Activated B cell treated with CpG ODN at 0.5 μM for 24 hours (primary cell): ENCODE measurements at regions of chr19 and their contacts with region 1.

Region 1: GRCh38 chr19:54364775-54365257 is at the start of gene LAIR1:
- DNase-seq: no peak
- ATAC-seq: peak; percentile 61
- H3K4me3 Mint-ChIP-seq: peak within 1 kb of the TSS; percentile 88
- H3K27ac Mint-ChIP-seq: peak within 1 kb of the TSS; percentile 90
- H3K4me1 Mint-ChIP-seq: peaks cover 88% of the 10 kb centered on the region
- H3K27me3 Mint-ChIP-seq: no peaks in the 10 kb centered on the region
- CTCF ChIP-seq: no peak
- total RNA-seq, gene LAIR1: 30.5 and 31.0 TPM in 2 replicates

Region 2: GRCh38 chr19:54062643-54063042 is 302.2 kb before region 1 on chr19:
- CTCF ChIA-PET with region 1: no interaction called
- POLR2A ChIA-PET with region 1: no interaction called
- intact Hi-C with region 1: no loop called
- DNase-seq: no peak
- ATAC-seq: no peak
- H3K4me3 Mint-ChIP-seq: no peak overlapping the region
- H3K27ac Mint-ChIP-seq: no peak overlapping the region
- H3K4me1 Mint-ChIP-seq: no peaks in the 10 kb centered on the region
- H3K27me3 Mint-ChIP-seq: peaks cover 10% of the 10 kb centered on the region
- CTCF ChIP-seq: no peak

Region 3: DNA sequence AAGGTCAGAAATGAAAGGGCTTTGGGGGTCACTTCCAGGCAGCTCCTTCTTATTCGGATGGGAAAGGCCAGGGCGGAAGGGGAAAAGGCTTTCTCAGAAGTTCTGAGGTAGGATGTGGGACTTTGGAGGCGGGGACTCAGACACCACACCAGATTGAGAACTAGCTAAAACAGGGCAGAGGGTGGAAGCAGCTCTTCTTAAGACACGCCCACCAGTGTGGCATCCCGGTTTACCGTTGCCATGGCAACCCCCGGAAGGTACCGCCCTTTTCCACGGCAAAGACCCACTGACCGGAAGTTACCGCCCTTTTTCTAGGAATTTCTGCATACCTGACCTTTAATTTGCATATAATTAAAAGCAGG is 48.1 kb before region 1 on chr19:
- CTCF ChIA-PET with region 1: no interaction called
- POLR2A ChIA-PET with region 1: no interaction called
- intact Hi-C with region 1: no loop called
- DNase-seq: no peak
- ATAC-seq: no peak
- H3K4me3 Mint-ChIP-seq: no peak overlapping the region
- H3K27ac Mint-ChIP-seq: no peak overlapping the region
- H3K4me1 Mint-ChIP-seq: peaks cover 52% of the 10 kb centered on the region
- H3K27me3 Mint-ChIP-seq: peaks cover 13% of the 10 kb centered on the region
- CTCF ChIP-seq: no peak

Region 4: DNA sequence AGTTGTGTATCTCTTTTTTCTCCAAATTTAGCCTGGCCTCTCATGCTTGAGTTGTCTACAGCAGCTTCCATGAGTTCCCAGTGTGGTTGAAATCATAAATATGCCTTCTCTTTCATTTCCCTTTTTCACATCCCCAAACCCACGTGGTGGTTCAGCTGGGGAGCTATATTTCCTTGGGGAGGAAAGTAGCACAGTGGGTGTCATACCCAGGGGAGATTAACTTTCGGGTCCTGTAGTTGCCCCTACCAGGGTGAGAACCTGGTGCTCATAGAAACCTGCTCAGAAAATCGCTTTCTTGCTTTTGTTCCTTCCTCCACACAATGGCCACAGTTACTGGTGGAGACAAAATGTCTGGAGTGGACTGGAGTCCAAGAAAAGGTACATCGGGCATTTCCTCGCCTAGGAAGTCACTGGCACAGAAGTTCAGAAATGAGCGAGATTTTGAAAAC is 18.9 kb before region 1 on chr19:
- CTCF ChIA-PET with region 1: no interaction called
- POLR2A ChIA-PET with region 1: interaction called, 14 read pairs
- intact Hi-C with region 1: no loop called
- DNase-seq: peak; percentile 42
- ATAC-seq: peak; percentile 94
- H3K4me3 Mint-ChIP-seq: peak overlapping the region; percentile 81
- H3K27ac Mint-ChIP-seq: peak overlapping the region; percentile 91
- H3K4me1 Mint-ChIP-seq: peaks cover 89% of the 10 kb centered on the region
- H3K27me3 Mint-ChIP-seq: peaks cover 4% of the 10 kb centered on the region
- CTCF ChIP-seq: no peak

Region 5: DNA sequence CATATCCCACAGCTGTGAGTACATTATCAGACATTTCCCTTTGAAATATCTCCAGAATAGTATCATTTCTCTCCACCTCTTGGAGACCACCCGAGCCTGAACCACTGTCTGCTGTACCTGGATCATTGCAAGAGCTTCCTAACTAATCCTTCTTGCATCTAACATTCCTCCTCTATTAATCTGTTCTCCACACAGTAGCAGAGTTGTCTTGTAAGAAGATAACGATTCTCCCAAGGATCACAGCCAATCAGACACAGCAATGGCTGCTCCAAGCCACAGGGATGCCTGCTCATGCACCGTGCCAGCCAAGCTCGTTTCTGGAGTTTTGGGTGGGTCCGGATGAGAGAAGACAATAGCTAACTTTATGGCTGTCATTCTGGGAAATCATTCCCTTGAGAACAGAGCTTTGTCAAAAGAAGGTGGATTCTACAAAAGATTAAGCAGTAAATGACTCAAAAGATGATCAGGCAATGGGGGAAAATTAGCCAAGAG is 14.4 kb after region 1 on chr19:
- CTCF ChIA-PET with region 1: interaction called, 4 read pairs
- POLR2A ChIA-PET with region 1: interaction called, 7 read pairs
- intact Hi-C with region 1: loop called (anchors 2 kb)
- DNase-seq: no peak
- ATAC-seq: no peak
- H3K4me3 Mint-ChIP-seq: peak overlapping the region; percentile 36
- H3K27ac Mint-ChIP-seq: peak overlapping the region; percentile 83
- H3K4me1 Mint-ChIP-seq: peaks cover 63% of the 10 kb centered on the region
- H3K27me3 Mint-ChIP-seq: no peaks in the 10 kb centered on the region
- CTCF ChIP-seq: no peak